H1 (cell line): ENCODE measurements at regions of chr12 and their contacts with region 1.

Region 1: DNA sequence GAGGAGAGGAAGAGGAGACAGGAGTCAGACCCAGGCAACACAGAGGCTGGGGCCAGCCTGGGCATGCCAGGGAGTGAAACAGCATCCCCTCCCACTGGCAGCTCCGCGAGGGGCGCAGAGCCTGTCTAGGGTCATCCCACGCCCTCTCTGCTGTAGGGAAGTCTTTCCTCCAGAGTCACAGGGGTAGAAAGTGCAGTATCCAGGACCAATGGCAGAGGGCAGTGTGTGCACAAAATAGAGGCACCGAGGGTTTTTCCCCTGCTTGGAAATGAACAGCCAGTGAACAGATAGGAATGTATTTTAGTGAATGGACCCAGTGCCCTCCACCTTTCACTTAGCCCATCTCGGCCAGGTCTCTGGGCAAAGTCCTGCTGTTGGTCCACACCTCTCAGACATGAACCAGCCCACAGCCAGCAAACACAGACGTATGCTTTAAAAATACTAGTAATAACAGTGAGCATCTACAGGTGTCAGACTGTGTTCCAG is 9.4 kb upstream of the KRT74 start:
- DNase-seq: peak; percentile 21 to 78
- H3K4me3 ChIP-seq: no peak overlapping the region
- H3K27ac ChIP-seq: no peak overlapping the region
- H3K4me1 ChIP-seq: no peaks in the 10 kb centered on the region
- H3K27me3 ChIP-seq: no peaks in the 10 kb centered on the region; a peak in 1 of 7 replicates
- CTCF ChIP-seq: peak; percentile 58 to 90 (median 86)
- EP300 ChIP-seq: no peak
- POLR2A ChIP-seq: no peak
- RAD21 ChIP-seq: peak; percentile 90 to 92

Region 2: DNA sequence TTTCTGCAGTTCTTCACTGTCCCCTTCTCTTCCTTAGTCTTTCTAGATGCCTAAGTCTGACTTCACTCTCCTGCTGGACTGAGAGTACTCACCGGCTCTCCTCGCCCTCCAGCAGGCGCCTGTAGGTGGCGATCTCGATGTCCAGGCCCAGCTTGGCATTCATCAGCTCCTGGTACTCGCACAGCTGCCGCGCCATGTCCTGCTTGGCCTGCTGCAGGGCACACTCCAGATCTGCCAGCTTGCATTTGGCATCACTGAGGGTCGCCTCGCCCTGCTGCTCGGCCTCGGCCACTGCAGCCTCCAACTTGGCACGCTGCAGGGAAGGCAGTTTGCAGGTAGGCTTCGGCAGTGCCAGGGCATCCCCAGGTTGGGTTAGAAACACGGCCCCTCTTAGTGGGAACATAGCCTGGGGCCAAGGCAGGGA is 202.7 kb before region 1 on chr12:
- CTCF ChIA-PET with region 1: interaction called, 24 read pairs
- POLR2A ChIA-PET with region 1: no interaction called
- DNase-seq: peak in 1 of 2 experiments; percentile 67
- H3K4me3 ChIP-seq: no peak overlapping the region
- H3K27ac ChIP-seq: no peak overlapping the region
- H3K4me1 ChIP-seq: no peaks in the 10 kb centered on the region
- H3K27me3 ChIP-seq: no peaks in the 10 kb centered on the region
- CTCF ChIP-seq: peak; percentile 68 to 77 (median 69)
- EP300 ChIP-seq: no peak
- POLR2A ChIP-seq: no peak
- RAD21 ChIP-seq: peak; percentile 36 to 51; a peak in 3 of 4 replicates

Region 3: GRCh38 chr12:52561880-52562449 is 21.0 kb before region 1 on chr12:
- CTCF ChIA-PET with region 1: interaction called, 21 read pairs
- POLR2A ChIA-PET with region 1: no interaction called
- DNase-seq: no peak
- H3K4me3 ChIP-seq: no peak overlapping the region
- H3K27ac ChIP-seq: no peak overlapping the region
- H3K4me1 ChIP-seq: no peaks in the 10 kb centered on the region
- H3K27me3 ChIP-seq: no peaks in the 10 kb centered on the region
- CTCF ChIP-seq: peak; percentile 47 to 56 (median 56)
- EP300 ChIP-seq: no peak
- POLR2A ChIP-seq: no peak
- RAD21 ChIP-seq: peak; percentile 29 to 46; a peak in 3 of 4 replicates

Region 4: GRCh38 chr12:52568111-52568510 is 14.9 kb before region 1 on chr12:
- CTCF ChIA-PET with region 1: interaction called, 29 read pairs
- POLR2A ChIA-PET with region 1: no interaction called
- DNase-seq: no peak
- H3K4me3 ChIP-seq: no peak overlapping the region
- H3K27ac ChIP-seq: no peak overlapping the region
- H3K4me1 ChIP-seq: no peaks in the 10 kb centered on the region
- H3K27me3 ChIP-seq: no peaks in the 10 kb centered on the region; a peak in 2 of 7 replicates
- CTCF ChIP-seq: no peak
- EP300 ChIP-seq: no peak
- POLR2A ChIP-seq: no peak
- RAD21 ChIP-seq: no peak

Region 5: DNA sequence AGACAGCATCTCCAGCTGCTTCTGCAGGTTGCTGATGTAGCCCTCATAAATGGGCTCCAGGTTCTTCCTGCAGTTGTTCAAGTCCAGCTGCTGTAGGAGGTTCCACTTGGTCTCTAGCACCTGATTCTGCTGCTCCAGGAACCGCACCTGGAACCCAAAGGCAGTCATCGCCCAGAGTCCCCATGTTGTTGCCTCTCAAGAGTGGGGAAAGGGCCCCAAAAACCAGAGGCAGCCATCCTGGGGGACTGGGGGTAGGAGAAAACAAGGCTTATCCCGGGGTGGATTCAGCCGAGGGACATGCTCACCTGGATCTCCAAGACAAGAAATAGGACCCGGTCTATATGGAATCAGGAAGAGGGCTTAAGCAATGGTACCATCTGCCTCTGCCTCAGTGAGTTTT is 16.0 kb after region 1 on chr12:
- CTCF ChIA-PET with region 1: interaction called, 24 read pairs
- POLR2A ChIA-PET with region 1: no interaction called
- DNase-seq: no peak
- H3K4me3 ChIP-seq: no peak overlapping the region
- H3K27ac ChIP-seq: no peak overlapping the region
- H3K4me1 ChIP-seq: no peaks in the 10 kb centered on the region
- H3K27me3 ChIP-seq: peaks cover 0 to 6% (median under 1%) of the 10 kb centered on the region in 4 experiments; a peak in 5 of 7 replicates
- CTCF ChIP-seq: no peak
- EP300 ChIP-seq: no peak
- POLR2A ChIP-seq: no peak
- RAD21 ChIP-seq: no peak

Region 6: DNA sequence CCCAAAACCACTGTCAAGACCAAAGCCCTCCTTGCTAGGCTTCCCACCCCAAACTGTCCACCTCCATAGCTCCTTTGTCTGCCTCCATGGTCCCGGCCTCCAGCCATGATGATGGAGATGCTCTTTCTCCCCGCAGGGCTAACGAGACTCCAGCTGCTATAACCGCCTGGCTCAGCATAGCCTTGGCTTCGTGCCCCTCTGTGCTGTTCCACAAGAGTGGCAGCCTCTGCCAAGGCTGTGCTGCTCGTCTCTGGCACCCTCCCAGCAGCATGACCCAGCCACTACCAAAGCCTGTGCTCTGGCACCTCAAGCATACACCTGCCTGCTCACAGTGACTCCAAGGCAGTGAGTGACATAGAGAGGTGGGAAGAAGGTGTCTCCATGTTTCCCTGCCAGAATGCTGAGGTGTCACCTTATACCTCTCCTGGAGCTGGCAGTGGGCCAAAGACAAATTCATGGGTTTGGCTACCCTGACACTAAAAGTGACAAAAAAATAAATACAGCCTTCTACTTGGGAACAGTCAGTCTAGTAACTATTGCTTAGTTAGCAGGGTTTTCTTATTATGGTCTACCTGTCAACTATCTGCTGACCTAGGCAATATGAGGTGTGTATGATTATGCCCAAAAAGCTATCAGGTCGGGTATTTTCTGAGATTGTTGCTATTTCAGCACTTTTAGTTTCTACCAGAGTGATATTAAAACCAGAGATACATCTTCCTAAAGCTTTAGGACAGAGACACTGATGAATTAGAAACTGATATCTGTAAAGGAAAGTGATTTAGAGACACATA is 51.4 kb after region 1 on chr12:
- CTCF ChIA-PET with region 1: no interaction called
- POLR2A ChIA-PET with region 1: no interaction called
- DNase-seq: peak in 1 of 2 experiments; percentile 14
- H3K4me3 ChIP-seq: no peak overlapping the region
- H3K27ac ChIP-seq: no peak overlapping the region
- H3K4me1 ChIP-seq: no peaks in the 10 kb centered on the region
- H3K27me3 ChIP-seq: no peaks in the 10 kb centered on the region; a peak in 1 of 7 replicates
- CTCF ChIP-seq: no peak
- EP300 ChIP-seq: no peak
- POLR2A ChIP-seq: no peak
- RAD21 ChIP-seq: no peak

Region 7: DNA sequence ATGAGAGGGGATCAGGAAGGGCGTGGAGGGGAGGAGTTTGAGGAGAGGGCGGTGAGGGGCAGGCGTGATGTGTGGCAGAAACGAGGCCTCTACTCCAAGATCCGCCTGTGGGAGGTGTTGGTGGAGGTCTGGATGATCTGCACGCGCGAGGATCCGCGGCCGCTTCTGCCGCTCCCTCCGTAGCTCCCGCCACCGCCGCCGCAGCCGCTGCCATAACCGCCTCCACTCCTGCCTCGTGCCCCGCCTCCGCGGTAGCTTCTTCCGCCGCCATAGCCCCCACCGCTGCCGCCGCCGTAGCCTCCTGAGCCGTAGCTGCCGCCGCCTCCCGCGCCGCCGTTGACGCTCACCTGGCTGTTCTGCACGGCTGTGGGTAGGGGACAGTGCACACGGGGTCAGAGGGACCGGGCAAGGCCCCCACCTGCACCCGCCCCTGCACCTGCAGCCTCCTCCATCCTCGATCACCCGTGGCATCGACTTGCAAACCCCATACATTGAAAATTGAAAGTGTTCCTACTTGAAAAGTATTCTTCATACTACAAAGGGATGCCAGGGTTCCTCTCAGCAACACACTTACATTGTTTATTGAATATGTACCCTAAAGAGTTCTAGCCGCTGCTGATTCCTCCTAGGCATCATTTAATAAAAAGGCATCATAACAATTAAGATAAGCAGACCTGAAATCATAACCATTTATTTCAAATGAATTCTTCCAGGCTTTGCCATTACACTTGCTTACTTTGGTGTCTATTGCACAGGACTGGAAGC is 108.2 kb after region 1 on chr12:
- CTCF ChIA-PET with region 1: interaction called, 11 read pairs
- POLR2A ChIA-PET with region 1: no interaction called
- DNase-seq: peak in 1 of 2 experiments; percentile 68
- H3K4me3 ChIP-seq: peak overlapping the region; percentile 31 to 58 (median 36)
- H3K27ac ChIP-seq: no peak overlapping the region
- H3K4me1 ChIP-seq: peaks cover 0 to 9% (median 3%) of the 10 kb centered on the region in 4 experiments; a peak in 2 of 7 replicates
- H3K27me3 ChIP-seq: peaks cover 0 to 30% (median 16%) of the 10 kb centered on the region in 4 experiments; a peak in 6 of 7 replicates
- CTCF ChIP-seq: no peak
- EP300 ChIP-seq: no peak
- POLR2A ChIP-seq: no peak
- RAD21 ChIP-seq: no peak